MCF 10A (cell line): ENCODE measurements at regions of chr14 and their contacts with region 1.

Region 1: DNA sequence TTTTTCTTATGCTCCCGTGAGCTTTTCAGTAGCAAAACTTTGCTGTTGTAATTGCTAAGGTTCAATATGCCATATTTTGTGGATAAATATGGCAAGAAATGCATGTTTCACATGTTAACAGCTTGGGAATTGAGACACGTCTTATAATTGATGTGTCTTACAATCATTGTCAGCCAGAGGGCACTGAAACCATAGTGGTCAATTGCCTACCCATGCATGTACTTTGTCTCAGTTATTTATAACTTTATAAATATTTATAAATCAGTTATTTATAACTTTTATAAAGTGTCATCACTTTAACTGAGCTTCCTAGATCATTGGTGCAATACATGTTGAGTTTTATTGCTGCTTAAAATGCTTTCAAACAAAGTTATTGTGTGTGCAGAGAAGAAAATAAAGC is 82.0 kb downstream of the CATSPERB start:
- DNase-seq: peak; percentile 57
- H3K4me3 Mint-ChIP-seq: no peak overlapping the region
- H3K27ac Mint-ChIP-seq: no peak overlapping the region
- H3K4me1 Mint-ChIP-seq: peaks cover 5% of the 10 kb centered on the region
- H3K27me3 Mint-ChIP-seq: no peaks in the 10 kb centered on the region
- CTCF ChIP-seq: peak; percentile 76

Region 2: DNA sequence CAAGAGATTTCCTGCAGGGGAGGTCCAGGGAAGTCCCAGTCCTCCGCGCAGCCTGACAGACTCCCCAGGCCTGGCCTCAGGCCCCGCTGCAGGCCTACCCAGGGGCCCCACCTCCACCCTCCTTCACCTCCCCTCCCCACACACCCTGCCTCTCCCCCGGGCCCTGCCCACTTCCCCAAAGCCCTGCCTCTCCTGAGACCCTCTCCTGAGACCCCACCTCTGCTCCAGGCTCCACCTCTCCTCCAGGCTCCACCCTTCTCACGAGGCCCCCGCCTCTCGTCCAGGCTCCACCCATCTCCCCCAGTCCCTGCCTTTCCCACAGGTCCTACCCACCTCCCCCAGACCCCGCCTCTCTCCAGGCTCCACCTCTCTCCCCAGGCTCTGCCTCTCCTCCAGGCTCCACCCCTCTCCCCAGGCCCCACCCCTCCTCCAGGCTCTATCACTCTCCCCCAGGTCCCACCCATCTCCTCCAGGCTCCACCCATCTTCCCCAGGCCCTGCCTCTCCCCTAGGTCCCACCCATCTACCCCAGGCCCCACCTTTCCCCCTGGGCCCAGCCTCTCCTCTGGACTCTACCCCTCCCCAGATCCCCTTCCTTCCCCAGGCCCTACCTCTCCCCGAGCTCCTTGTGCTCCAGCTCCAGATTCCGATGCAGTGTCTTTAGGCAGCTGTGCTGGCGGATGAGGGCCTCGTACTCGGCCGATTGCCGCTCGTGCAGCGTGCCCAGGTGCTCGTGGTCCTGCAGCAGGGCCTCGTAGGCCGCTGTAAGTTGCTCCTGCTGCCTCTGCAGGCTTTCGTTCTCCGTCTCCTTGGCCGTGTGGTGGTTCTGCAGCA is 346.6 kb before region 1 on chr14:
- CTCF ChIA-PET with region 1: no interaction called
- POLR2A ChIA-PET with region 1: no interaction called
- intact Hi-C with region 1: no loop called
- DNase-seq: peak; percentile 26
- H3K4me3 Mint-ChIP-seq: no peak overlapping the region
- H3K27ac Mint-ChIP-seq: no peak overlapping the region
- H3K4me1 Mint-ChIP-seq: no peaks in the 10 kb centered on the region
- H3K27me3 Mint-ChIP-seq: no peaks in the 10 kb centered on the region
- CTCF ChIP-seq: no peak

Region 3: GRCh38 chr14:91669261-91669660 is 19.3 kb after region 1 on chr14:
- CTCF ChIA-PET with region 1: no interaction called
- POLR2A ChIA-PET with region 1: no interaction called
- intact Hi-C with region 1: no loop called
- DNase-seq: no peak
- H3K4me3 Mint-ChIP-seq: no peak overlapping the region
- H3K27ac Mint-ChIP-seq: no peak overlapping the region
- H3K4me1 Mint-ChIP-seq: no peaks in the 10 kb centered on the region
- H3K27me3 Mint-ChIP-seq: no peaks in the 10 kb centered on the region
- CTCF ChIP-seq: no peak

Region 4: GRCh38 chr14:91836119-91836881 is 186.4 kb after region 1 on chr14:
- CTCF ChIA-PET with region 1: interaction called, 3 read pairs
- POLR2A ChIA-PET with region 1: no interaction called
- intact Hi-C with region 1: loop called (anchors 5 kb)
- DNase-seq: peak; percentile 88
- H3K4me3 Mint-ChIP-seq: peak overlapping the region; percentile 81
- H3K27ac Mint-ChIP-seq: peak overlapping the region; percentile 71
- H3K4me1 Mint-ChIP-seq: peaks cover 15% of the 10 kb centered on the region
- H3K27me3 Mint-ChIP-seq: peaks cover 11% of the 10 kb centered on the region
- CTCF ChIP-seq: no peak

Region 5: DNA sequence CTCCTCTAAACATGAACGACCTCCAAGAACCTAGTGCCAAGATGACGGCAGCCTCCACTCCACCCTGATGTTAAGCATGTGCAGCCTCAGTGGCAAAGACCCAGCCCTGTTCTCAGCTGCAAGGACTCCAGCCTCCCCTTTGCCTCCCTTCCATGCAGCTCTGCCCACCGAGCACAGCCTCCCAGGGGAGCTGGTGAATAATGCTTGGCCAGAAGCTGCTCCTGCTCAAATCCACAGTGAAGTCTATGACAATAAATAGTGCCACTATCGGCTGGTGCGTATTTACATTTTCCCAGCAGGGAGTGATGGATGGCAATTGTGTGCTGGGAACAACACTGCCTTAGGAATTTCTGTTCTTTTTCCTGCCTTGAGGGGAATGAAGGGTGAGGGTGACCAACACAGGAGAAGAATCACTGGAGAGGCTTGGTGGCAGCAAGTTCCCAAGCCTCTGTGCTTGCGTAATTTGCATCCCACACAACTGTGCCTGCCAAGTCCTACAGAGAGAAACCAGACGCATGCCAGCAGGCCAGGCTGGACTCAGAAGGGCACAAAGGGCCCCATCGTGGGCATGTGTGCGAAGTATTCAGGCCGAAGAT is 247.3 kb after region 1 on chr14:
- CTCF ChIA-PET with region 1: interaction called, 7 read pairs
- POLR2A ChIA-PET with region 1: no interaction called
- intact Hi-C with region 1: loop called (anchors 5 kb)
- DNase-seq: peak; percentile 95
- H3K4me3 Mint-ChIP-seq: no peak overlapping the region
- H3K27ac Mint-ChIP-seq: peak overlapping the region; percentile 61
- H3K4me1 Mint-ChIP-seq: peaks cover 15% of the 10 kb centered on the region
- H3K27me3 Mint-ChIP-seq: no peaks in the 10 kb centered on the region
- CTCF ChIP-seq: no peak

Region 6: DNA sequence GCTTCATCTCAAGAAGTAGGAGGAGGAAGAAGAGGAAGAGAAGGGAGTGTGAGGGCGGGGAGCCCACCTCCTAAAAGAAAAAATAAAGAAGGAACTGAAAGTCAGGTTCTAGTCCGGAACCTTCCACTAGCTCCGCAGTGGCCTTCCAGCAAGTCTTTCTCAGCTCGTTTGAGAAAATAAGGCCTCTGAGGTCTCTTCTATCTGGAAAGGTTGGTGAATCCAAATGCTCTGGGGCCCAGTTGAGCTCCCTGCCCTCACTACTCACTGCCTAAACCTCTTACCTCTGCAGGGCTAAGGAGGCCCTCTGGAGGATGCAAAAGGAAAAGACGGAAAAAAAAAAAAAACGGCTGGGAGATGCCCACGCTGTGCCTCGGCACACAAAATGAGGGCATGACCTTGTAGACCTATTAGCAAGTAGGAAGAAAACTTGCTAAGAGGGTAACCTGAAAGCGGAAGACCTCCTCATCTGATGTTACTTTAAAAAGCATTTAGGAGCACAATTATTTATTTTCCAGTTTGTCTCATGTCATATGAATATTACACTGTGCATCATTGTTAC is 261.6 kb after region 1 on chr14:
- CTCF ChIA-PET with region 1: interaction called, 87 read pairs
- POLR2A ChIA-PET with region 1: interaction called, 6 read pairs
- intact Hi-C with region 1: loop called (anchors 1 kb)
- DNase-seq: peak; percentile 78
- H3K4me3 Mint-ChIP-seq: no peak overlapping the region
- H3K27ac Mint-ChIP-seq: peak overlapping the region; percentile 39
- H3K4me1 Mint-ChIP-seq: no peaks in the 10 kb centered on the region
- H3K27me3 Mint-ChIP-seq: no peaks in the 10 kb centered on the region
- CTCF ChIP-seq: peak; percentile 64